Astrocyte of the cerebellum (primary cell): ENCODE measurements at regions of chr17 and their contacts with region 1.

Region 1: GRCh38 chr17:63984651-63985386 is 12.1 kb upstream of the SCN4A start:
- DNase-seq: peak; percentile 74
- H3K4me3 ChIP-seq: no peak overlapping the region
- CTCF ChIP-seq: no peak

Region 2: GRCh38 chr17:63929860-63930766 is 54.7 kb before region 1 on chr17:
- in situ Hi-C with region 1: loop called (anchors 5 kb)
- DNase-seq: no peak
- H3K4me3 ChIP-seq: no peak overlapping the region
- CTCF ChIP-seq: no peak